Activated CD4-positive, alpha-beta T cell treated with anti-CD3 and anti-CD28 coated beads, Interleukin-2, amount 10 ng/mL, durations not matched to agents 24 days and 14 days (primary cell): ENCODE measurements at regions of chr10 and their contacts with region 1.

Region 1: DNA sequence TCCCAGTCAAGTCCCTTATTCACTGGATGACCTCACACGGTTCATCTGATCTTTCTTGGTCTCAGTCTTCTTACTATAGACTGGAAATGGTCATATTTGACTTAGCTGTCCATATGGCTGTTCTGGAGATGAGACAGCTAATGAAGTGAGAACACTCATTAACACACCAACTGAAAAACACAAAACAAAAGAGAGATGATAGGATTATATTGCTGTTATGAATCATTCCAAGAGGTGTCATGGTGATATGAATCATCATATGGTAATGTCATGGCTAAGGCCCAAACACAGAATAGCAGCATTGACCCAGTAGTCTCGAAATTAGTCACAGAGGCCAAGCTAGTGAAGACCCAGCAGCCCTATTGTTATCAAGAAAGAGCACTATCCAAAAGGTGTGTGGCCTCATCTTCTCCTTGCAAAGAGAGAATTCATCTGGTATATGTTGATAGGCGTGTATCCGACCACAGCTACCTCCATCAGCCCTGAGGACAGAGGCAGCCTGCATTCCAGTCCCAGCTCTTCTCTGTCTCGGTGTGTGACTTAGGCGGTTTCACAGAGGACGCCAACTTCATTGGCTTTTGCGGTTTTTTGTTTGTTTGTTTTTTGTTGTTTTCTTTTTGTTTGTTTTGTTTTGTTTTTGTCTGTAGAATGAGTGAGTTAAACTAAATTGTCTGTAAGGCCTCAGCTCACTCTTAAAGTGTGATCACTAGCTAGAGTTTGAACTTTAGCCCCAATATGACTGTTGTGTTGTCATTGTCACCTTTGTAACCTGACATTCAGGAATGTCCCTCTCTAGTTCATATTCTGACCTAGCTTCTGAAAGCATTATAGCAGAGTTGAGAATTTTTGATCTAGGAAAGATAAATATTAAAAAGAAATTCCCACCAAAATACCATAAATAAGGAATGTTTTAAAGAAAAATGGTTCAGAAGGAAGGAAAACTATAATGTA is 97.4 kb upstream of the PDCD4 start:
- DNase-seq: peak; percentile 83
- H3K4me3 Mint-ChIP-seq: peak overlapping the region; percentile 40
- H3K27ac Mint-ChIP-seq: peak overlapping the region; percentile 93
- H3K4me1 Mint-ChIP-seq: peaks cover 50% of the 10 kb centered on the region
- H3K27me3 Mint-ChIP-seq: peaks cover 3% of the 10 kb centered on the region

Region 2: DNA sequence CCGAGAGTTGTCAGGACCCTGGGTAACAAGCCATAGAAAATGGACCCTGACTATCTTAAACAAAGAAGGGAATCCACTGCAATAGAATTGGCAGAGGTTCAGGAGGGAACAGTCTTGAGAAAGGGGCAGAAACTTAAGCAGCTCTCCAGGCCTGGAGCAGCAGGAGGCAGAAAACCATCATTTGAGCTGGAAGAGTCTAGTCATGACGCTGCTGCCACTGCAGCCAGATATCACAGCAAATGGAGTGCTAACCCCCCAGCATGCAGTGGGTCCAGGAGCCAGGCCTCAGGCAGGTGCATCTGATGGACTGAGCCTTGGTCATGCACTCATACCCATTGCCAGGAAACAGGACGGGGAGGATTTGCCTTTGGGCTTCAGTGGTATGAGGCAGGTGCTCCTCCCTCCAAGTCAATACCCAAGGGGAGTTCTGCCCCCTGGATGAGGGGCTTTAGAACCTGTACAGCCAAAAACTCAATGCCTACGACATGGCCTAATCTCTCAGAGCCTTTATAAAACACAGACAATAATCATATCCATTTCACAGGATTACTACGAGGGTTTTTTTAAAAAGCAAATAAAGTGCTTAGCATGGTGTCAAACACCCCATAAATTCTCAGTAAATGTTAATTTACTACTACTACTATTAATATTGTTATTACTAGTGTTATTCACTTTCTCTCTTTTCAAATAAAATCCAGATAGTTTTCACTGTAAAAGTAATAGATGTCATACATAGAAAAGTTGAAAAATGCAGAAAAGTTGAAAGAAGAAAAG is 245.9 kb before region 1 on chr10:
- intact Hi-C with region 1: loop called (anchors 1 kb)
- DNase-seq: no peak
- H3K4me3 Mint-ChIP-seq: peak overlapping the region; percentile 57
- H3K27ac Mint-ChIP-seq: peak overlapping the region; percentile 84
- H3K4me1 Mint-ChIP-seq: peaks cover 69% of the 10 kb centered on the region
- H3K27me3 Mint-ChIP-seq: no peaks in the 10 kb centered on the region

Region 3: DNA sequence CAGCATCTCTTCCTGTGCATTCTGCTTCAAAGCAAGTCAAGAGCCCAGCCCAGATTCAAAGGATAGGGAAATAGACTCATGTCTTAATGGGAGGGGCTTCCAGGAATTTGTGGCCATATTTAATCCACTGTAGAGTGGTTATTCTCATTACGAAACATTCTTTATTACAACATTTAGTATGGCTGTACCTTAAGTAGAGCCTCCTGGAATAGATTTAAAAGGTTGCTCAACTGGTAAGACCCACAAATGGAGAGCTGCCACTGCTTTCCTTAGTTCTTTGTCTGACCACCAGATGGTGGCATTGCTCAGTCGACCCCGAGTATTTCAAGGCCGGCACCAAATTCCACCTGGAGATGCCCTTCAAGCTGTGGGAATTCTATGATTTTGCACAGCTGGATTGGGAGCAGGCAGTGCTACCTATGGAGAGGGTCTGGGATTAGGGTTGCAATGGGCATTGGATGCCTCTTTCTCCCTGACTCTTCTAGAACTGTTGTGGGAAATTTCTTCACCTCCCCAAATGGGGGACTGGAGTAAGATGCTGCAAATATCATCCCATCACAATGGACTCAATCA is 28.0 kb before region 1 on chr10:
- intact Hi-C with region 1: loop called (anchors 1 kb)
- DNase-seq: peak; percentile 84
- H3K4me3 Mint-ChIP-seq: no peak overlapping the region
- H3K27ac Mint-ChIP-seq: no peak overlapping the region
- H3K4me1 Mint-ChIP-seq: peaks cover 43% of the 10 kb centered on the region
- H3K27me3 Mint-ChIP-seq: no peaks in the 10 kb centered on the region

Region 4: DNA sequence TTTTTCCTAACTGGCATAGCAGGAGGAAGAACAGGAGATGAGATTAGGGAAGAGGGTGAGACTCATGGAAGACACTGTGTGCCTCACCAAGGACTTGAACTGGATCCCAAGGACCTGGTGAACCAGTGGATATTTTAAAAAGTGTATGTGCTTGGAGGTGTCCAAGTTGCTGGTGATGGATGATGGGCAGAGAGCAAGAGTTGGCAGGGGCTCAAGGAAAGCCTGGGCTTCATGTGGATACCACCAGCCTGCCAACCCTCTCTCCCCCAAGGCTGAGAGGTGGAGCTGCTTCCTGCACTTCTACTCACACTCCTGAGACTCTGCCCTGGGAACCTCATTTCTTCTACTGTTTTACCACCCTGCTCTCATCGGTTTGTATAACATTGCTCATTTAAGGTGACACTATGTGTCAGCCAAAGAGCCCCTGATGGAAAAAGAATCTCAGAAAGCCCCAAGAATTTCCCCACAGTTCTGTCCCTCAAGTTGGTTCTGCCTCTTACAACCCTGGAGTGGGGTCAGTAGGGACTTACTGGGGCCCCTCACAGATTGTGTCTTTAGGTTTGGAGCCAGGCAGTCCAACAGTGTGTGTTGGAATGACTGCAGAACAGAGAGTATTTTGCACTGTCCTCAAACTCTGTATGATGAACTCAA is 41.1 kb after region 1 on chr10:
- intact Hi-C with region 1: loop called (anchors 1 kb)
- DNase-seq: no peak
- H3K4me3 Mint-ChIP-seq: no peak overlapping the region
- H3K27ac Mint-ChIP-seq: peak overlapping the region; percentile 11
- H3K4me1 Mint-ChIP-seq: peaks cover 19% of the 10 kb centered on the region
- H3K27me3 Mint-ChIP-seq: no peaks in the 10 kb centered on the region

Region 5: DNA sequence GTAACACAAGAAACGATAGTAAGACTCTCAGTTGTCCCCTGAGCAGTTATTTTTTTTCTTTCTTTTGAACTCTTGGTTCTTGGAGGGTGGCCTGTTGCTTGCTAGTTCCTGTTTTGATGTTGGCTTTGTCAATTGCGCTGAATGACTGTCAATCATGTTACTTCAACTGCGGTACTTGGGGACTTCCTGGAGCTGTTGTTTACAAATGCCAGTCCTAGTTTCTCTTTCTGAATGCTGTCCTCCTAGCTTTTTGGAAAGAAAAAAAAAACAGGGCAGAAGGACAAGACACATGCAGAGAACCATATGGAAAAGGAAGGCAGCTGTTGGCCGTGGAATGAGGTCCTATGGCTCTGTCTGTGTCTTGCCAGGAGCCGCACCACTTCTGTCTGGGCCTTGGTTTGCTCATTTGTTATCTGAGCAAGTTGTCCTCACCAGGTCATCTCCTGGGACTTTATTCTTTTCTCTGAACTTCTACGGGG is 90.4 kb after region 1 on chr10:
- intact Hi-C with region 1: loop called (anchors 1 kb)
- DNase-seq: peak; percentile 91
- H3K4me3 Mint-ChIP-seq: peak overlapping the region; percentile 79
- H3K27ac Mint-ChIP-seq: peak overlapping the region; percentile 97
- H3K4me1 Mint-ChIP-seq: peaks cover 82% of the 10 kb centered on the region
- H3K27me3 Mint-ChIP-seq: no peaks in the 10 kb centered on the region

Region 6: GRCh38 chr10:110993024-110993693 is 218.8 kb after region 1 on chr10:
- intact Hi-C with region 1: loop called (anchors 2 kb)
- DNase-seq: peak; percentile 79
- H3K4me3 Mint-ChIP-seq: peak overlapping the region; percentile 66
- H3K27ac Mint-ChIP-seq: peak overlapping the region; percentile 18
- H3K4me1 Mint-ChIP-seq: peaks cover 21% of the 10 kb centered on the region
- H3K27me3 Mint-ChIP-seq: no peaks in the 10 kb centered on the region